ENCODE measurements at regions of chr15 and their contacts with region 1.

Region 1: DNA sequence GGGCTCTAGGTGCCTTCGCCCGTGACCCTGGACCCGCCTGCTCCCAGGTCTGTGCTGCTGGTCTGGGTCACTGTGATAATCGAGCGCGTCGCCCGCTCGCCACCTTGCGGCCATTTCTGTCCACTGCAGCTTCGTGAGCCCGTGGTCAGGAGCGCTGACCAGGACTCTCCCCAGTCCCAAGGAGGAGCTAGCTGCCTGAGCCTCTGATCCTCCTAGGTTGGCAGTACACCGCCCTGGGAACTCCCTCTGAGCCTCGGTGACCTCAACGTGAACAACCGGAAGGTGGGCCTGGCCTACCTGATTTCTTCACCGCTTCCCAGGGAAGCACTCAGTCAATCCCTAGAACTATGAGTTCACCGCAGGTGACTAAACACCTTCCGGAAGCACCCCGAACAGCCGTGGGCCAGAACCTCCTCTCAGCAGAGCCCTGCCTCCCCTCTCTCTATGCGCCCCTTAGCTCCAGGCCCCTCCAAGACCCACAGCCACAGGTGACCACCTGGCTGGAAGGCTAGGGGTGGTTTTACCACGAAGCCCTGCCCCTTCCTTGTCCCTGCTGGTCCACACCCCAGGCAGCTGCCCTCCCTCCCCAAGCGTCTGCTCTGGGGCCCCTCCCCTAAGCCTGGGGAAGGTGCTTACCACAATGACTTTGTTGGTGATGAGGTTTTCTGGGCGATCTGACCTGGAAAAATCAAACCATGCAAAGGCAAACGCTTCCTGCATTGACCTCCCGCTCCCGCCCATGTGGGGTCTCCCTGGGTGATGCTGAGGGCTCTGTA is 9.7 kb downstream of the PLA2G4D start:
- DNase-seq: peak; percentile 55
- H3K4me3 Mint-ChIP-seq: no peak overlapping the region
- H3K27ac Mint-ChIP-seq: no peak overlapping the region
- H3K4me1 Mint-ChIP-seq: peaks cover 15% of the 10 kb centered on the region
- H3K27me3 Mint-ChIP-seq: peaks cover 21% of the 10 kb centered on the region

Region 2: GRCh38 chr15:41727143-41727542 is 357.5 kb before region 1 on chr15:
- CTCF ChIA-PET with region 1: no interaction called
- POLR2A ChIA-PET with region 1: no interaction called
- DNase-seq: no peak
- H3K4me3 Mint-ChIP-seq: no peak overlapping the region
- H3K27ac Mint-ChIP-seq: no peak overlapping the region
- H3K4me1 Mint-ChIP-seq: no peaks in the 10 kb centered on the region
- H3K27me3 Mint-ChIP-seq: no peaks in the 10 kb centered on the region

Region 3: DNA sequence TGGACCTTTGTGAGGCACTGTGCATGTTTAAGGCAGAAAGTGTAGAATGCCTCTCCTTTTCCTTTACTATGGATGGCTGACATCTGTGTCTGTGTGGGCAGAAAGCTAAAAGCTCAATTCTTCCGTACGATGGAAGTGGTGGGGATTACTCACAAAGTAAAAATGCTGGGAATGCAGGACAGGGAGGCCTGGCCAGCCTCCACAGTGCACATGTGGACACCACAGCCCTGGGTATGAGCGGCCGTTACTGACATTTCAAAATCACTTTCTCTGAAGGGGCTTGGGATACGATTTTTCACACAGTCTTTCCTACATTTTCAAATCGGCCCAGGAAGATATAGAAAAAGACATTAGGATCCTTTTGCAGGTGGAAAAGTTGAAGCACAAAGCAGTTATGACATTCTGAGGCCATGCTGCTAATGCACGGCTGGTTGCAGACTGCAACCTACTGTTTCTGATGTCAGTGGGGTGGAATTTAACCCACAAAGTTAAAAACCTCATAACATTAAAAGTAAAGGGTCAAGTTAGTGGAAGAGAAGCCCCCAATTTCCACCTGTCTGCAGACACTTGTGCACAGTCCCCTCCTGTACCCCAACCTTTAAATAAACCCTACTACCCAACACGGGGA is 140.2 kb before region 1 on chr15:
- CTCF ChIA-PET with region 1: no interaction called
- POLR2A ChIA-PET with region 1: no interaction called
- DNase-seq: no peak
- H3K4me3 Mint-ChIP-seq: no peak overlapping the region
- H3K27ac Mint-ChIP-seq: no peak overlapping the region
- H3K4me1 Mint-ChIP-seq: peaks cover 34% of the 10 kb centered on the region
- H3K27me3 Mint-ChIP-seq: no peaks in the 10 kb centered on the region

Region 4: GRCh38 chr15:42065033-42065432 is 19.6 kb before region 1 on chr15:
- CTCF ChIA-PET with region 1: interaction called, 11 read pairs
- POLR2A ChIA-PET with region 1: no interaction called
- DNase-seq: no peak
- H3K4me3 Mint-ChIP-seq: no peak overlapping the region
- H3K27ac Mint-ChIP-seq: no peak overlapping the region
- H3K4me1 Mint-ChIP-seq: peaks cover 7% of the 10 kb centered on the region
- H3K27me3 Mint-ChIP-seq: peaks cover 20% of the 10 kb centered on the region